Caco-2 (cell line): ENCODE measurements at regions of chr9 and their contacts with region 1.

Region 1: GRCh38 chr9:115359017-115359780 is 241.2 kb upstream of the TNC start:
- DNase-seq: peak in 1 of 2 experiments; percentile 5
- H3K4me3 ChIP-seq: no peak overlapping the region
- H3K4me3 Mint-ChIP-seq: no peak overlapping the region
- H3K27ac Mint-ChIP-seq: no peak overlapping the region
- H3K4me1 ChIP-seq: peaks cover 17% of the 10 kb centered on the region
- H3K4me1 Mint-ChIP-seq: peaks cover 24% of the 10 kb centered on the region
- H3K27me3 ChIP-seq: no peaks in the 10 kb centered on the region
- H3K27me3 Mint-ChIP-seq: no peaks in the 10 kb centered on the region
- CTCF ChIP-seq: no peak

Region 2: GRCh38 chr9:115085773-115086377 is 273.3 kb before region 1 on chr9:
- CTCF ChIA-PET with region 1: no interaction called
- POLR2A ChIA-PET with region 1: no interaction called
- intact Hi-C with region 1: no loop called
- DNase-seq: no peak
- H3K4me3 ChIP-seq: no peak overlapping the region
- H3K4me3 Mint-ChIP-seq: no peak overlapping the region
- H3K27ac Mint-ChIP-seq: no peak overlapping the region
- H3K4me1 ChIP-seq: no peaks in the 10 kb centered on the region
- H3K4me1 Mint-ChIP-seq: no peaks in the 10 kb centered on the region
- H3K27me3 ChIP-seq: no peaks in the 10 kb centered on the region
- H3K27me3 Mint-ChIP-seq: no peaks in the 10 kb centered on the region
- CTCF ChIP-seq: no peak

Region 3: DNA sequence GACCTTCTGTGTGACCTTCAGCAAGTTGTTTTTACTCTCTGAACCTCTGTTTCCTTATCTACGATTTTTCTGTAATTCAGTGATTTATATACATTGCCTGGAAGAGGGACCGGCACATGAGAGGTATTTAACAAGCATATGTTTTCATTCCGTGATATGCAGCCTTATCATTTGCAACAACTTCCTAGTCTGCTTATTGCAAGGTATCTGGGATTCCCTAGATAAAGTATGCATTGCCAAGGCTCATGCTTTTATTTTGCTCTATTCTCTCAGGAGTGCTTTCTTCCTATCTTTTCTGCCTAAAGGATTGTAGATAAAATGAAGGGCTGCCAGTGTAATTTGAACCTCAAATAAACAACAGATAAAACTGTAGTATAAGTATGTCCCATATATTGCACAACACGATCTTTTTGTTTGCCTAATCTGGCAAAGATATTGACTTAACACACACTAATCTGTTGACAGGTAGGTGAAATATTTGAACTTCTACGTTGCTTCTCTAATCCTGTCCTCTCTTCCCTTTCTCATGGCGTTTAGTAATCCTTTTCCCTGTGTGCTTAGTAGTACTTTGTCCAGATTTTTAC is 135.9 kb after region 1 on chr9:
- CTCF ChIA-PET with region 1: no interaction called
- POLR2A ChIA-PET with region 1: no interaction called
- intact Hi-C with region 1: loop called (anchors 1 kb)
- DNase-seq: peak in 1 of 2 experiments; percentile 44
- H3K4me3 ChIP-seq: no peak overlapping the region
- H3K4me3 Mint-ChIP-seq: no peak overlapping the region
- H3K27ac Mint-ChIP-seq: no peak overlapping the region
- H3K4me1 ChIP-seq: peaks cover 20% of the 10 kb centered on the region
- H3K4me1 Mint-ChIP-seq: peaks cover 10% of the 10 kb centered on the region
- H3K27me3 ChIP-seq: no peaks in the 10 kb centered on the region
- H3K27me3 Mint-ChIP-seq: peaks cover 3% of the 10 kb centered on the region
- CTCF ChIP-seq: no peak